Activated CD4-positive, alpha-beta T cell treated with anti-CD3 and anti-CD28 coated beads, Interleukin-2, amount 10 ng/mL, durations not matched to agents 7 days and 5 days (primary cell): ENCODE measurements at regions of chr3 and their contacts with region 1.

Region 1: DNA sequence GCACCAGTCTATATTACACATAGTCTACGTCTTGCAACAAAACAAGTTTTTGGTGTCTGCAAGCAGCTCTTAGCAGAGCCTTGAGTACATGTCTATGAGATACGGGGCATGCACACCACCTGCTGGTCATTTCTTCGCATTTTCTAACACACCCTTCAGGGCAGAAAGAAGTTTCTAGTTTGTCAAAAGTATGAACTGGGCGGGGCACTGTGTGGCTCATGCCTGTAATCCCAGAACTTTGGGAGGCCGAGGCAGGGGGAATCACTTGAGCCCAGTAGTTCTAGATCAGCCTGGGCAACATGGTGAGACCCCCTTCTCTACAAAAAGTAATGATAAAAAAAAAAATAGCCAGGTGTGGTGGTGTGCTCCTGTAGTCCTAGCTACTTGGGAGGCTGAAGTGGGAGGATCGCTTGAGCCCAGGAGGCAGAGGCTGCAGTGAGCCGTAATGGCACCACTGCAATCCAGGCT is 64.2 kb upstream of the ARL8B start:
- DNase-seq: peak; percentile 84
- H3K4me3 Mint-ChIP-seq: no peak overlapping the region
- H3K27ac Mint-ChIP-seq: no peak overlapping the region
- H3K4me1 Mint-ChIP-seq: peaks cover 26% of the 10 kb centered on the region
- H3K27me3 Mint-ChIP-seq: peaks cover 7% of the 10 kb centered on the region

Region 2: GRCh38 chr3:4720279-4721075 is 337.4 kb before region 1 on chr3:
- CTCF ChIA-PET with region 1: interaction called, 19 read pairs
- POLR2A ChIA-PET with region 1: interaction called, 3 read pairs
- DNase-seq: peak; percentile 24
- H3K4me3 Mint-ChIP-seq: no peak overlapping the region
- H3K27ac Mint-ChIP-seq: no peak overlapping the region
- H3K4me1 Mint-ChIP-seq: peaks cover 50% of the 10 kb centered on the region
- H3K27me3 Mint-ChIP-seq: no peaks in the 10 kb centered on the region

Region 3: GRCh38 chr3:4986782-4987537 is 70.9 kb before region 1 on chr3:
- CTCF ChIA-PET with region 1: interaction called, 16 read pairs
- POLR2A ChIA-PET with region 1: no interaction called
- DNase-seq: peak; percentile 80
- H3K4me3 Mint-ChIP-seq: peak overlapping the region; percentile 78
- H3K27ac Mint-ChIP-seq: peak overlapping the region; percentile 87
- H3K4me1 Mint-ChIP-seq: peaks cover 67% of the 10 kb centered on the region
- H3K27me3 Mint-ChIP-seq: no peaks in the 10 kb centered on the region

Region 4: DNA sequence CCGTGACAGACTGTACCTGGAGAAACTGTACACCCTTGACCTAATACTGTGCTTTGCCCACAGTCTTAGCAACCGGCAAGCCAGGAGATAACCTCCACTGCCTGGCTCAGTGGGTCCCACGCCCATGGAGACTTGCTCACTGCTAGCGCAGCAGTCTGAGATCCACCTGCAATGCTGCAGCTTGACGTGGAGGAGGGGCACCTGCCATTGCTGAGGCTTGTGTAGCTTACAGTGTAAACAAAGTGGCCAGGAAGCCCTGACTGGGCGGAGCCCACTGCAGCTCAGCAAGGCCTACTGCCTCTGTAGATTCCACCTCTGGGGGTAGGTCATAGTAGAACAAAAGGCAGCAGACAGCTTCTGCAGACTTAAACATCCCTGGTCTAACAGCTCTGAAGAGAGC is 318.9 kb after region 1 on chr3:
- CTCF ChIA-PET with region 1: no interaction called
- POLR2A ChIA-PET with region 1: no interaction called
- DNase-seq: no peak
- H3K4me3 Mint-ChIP-seq: no peak overlapping the region
- H3K27ac Mint-ChIP-seq: no peak overlapping the region
- H3K4me1 Mint-ChIP-seq: no peaks in the 10 kb centered on the region
- H3K27me3 Mint-ChIP-seq: no peaks in the 10 kb centered on the region